Calu3 (cell line): ENCODE measurements at regions of chr13 and their contacts with region 1.

Region 1: GRCh38 chr13:95552539-95553441 is at the start of gene CLDN10:
- DNase-seq: peak; percentile 50
- H3K4me3 Mint-ChIP-seq: peak within 1 kb of the TSS; percentile 77
- H3K27ac Mint-ChIP-seq: no peak within 1 kb of the TSS
- H3K4me1 Mint-ChIP-seq: no peaks in the 10 kb centered on the region
- H3K27me3 Mint-ChIP-seq: no peaks in the 10 kb centered on the region
- CTCF ChIP-seq: no peak
- total RNA-seq, gene CLDN10: 46.8 and 55.0 TPM in 2 replicates

Region 2: GRCh38 chr13:95160112-95160906 is 392.5 kb before region 1 on chr13:
- CTCF ChIA-PET with region 1: interaction called, 14 read pairs
- intact Hi-C with region 1: no loop called
- DNase-seq: peak; percentile 2
- H3K4me3 Mint-ChIP-seq: no peak overlapping the region
- H3K27ac Mint-ChIP-seq: no peak overlapping the region
- H3K4me1 Mint-ChIP-seq: no peaks in the 10 kb centered on the region
- H3K27me3 Mint-ChIP-seq: no peaks in the 10 kb centered on the region
- CTCF ChIP-seq: no peak

Region 3: GRCh38 chr13:95335667-95336066 is 217.1 kb before region 1 on chr13:
- CTCF ChIA-PET with region 1: no interaction called
- intact Hi-C with region 1: no loop called
- DNase-seq: no peak
- H3K4me3 Mint-ChIP-seq: no peak overlapping the region
- H3K27ac Mint-ChIP-seq: no peak overlapping the region
- H3K4me1 Mint-ChIP-seq: no peaks in the 10 kb centered on the region
- H3K27me3 Mint-ChIP-seq: no peaks in the 10 kb centered on the region
- CTCF ChIP-seq: no peak

Region 4: DNA sequence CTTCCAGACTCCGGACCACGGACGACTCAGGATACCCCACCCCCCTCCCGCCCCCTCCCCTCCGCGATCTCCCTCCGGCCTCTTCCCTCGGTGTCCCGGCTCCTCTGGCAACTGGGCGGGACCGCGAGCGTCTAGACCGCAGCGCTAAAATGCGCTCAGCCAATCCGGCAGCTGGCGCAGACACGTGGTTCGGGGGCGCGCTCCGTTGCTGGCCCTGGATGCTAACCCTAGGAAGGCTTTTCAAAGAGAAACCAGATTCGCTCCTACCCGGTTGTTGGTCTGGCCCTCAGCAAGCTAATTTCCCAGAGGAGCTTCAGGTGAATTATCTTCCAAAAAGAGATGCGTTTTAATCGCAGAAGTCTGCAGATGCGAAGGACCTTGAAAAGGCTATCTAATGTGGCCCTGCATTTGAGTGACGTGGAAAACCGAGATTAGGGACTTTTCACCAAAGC is 91.8 kb after region 1 on chr13 and contains the start of gene DZIP1:
- CTCF ChIA-PET with region 1: no interaction called
- intact Hi-C with region 1: no loop called
- DNase-seq: peak; percentile 50
- H3K4me3 Mint-ChIP-seq: peak within 1 kb of the TSS; percentile 63
- H3K27ac Mint-ChIP-seq: no peak within 1 kb of the TSS
- H3K4me1 Mint-ChIP-seq: no peaks in the 10 kb centered on the region
- H3K27me3 Mint-ChIP-seq: no peaks in the 10 kb centered on the region
- CTCF ChIP-seq: no peak
- total RNA-seq, gene DZIP1: 10.2 and 13.3 TPM in 2 replicates